AG04450 (cell line): ENCODE measurements at regions of chr17 and their contacts with region 1.

Region 1: DNA sequence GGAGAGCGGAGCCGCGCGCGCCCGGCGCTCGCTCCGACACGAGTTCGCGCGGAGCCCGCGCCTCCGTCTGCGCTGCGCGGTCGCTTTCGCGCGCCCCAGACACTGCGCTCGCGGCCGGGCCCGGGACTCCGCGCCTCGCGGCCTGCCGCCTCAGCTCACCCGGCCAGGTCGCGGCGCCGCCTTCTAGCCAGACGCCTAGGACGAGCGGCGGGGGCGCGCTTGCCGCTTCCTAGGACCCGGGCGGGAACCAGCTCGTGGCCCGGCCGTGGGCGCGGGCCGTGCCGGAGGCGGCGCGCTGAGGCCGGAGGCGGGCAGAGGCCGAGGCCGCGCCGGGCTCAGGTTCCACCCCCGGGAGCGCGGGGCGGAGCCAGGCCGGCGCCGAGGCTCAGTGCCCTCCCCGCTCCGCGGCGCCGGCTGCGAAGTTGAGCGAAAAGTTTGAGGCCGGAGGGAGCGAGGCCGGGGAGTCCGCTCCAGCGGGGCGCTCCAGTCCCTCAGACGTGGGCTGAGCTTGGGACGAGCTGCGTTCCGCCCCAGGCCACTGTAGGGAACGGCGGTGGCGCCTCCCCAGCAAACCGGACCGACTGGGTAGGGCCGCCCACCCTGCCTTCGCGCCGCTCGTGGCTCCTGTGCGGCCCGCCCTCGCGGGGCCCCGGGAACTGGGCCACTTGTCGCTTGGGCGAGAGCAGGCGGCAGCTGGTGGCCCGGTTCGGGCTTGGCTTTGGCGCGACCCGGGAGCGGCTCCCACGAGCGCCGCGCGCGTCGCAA is at the start of gene SPHK1:
- DNase-seq: no peak
- H3K4me3 ChIP-seq: peak within 1 kb of the TSS; percentile 74
- H3K27ac ChIP-seq: peak within 1 kb of the TSS; percentile 87
- H3K27me3 ChIP-seq: no peaks in the 10 kb centered on the region
- CTCF ChIP-seq: no peak
- polyA plus RNA-seq, gene SPHK1: 11.6 and 16.2 TPM in 2 replicates

Region 2: DNA sequence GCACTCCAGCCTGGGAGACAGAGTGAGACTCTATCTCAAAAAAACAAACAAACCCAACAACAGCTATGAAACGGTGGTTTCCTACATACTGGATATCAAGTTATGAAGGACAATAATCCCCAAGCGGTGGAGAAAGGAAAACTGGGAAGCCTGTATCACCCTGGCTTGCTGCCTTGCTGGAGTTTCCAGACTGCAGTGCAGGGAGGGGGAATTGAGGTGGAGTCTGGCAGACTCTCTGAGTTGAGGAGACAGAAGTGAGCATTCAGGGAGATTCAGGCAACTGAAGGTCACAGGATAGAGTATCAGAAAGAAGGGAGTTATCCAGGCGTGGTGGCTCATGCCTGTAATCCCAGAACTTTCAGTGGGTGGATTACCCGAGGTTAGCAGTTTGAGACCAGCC is 88.2 kb before region 1 on chr17:
- CTCF ChIA-PET with region 1: interaction called, 13 read pairs
- POLR2A ChIA-PET with region 1: no interaction called
- DNase-seq: no peak
- H3K4me3 ChIP-seq: no peak overlapping the region
- H3K27ac ChIP-seq: no peak overlapping the region
- H3K27me3 ChIP-seq: no peaks in the 10 kb centered on the region
- CTCF ChIP-seq: no peak

Region 3: DNA sequence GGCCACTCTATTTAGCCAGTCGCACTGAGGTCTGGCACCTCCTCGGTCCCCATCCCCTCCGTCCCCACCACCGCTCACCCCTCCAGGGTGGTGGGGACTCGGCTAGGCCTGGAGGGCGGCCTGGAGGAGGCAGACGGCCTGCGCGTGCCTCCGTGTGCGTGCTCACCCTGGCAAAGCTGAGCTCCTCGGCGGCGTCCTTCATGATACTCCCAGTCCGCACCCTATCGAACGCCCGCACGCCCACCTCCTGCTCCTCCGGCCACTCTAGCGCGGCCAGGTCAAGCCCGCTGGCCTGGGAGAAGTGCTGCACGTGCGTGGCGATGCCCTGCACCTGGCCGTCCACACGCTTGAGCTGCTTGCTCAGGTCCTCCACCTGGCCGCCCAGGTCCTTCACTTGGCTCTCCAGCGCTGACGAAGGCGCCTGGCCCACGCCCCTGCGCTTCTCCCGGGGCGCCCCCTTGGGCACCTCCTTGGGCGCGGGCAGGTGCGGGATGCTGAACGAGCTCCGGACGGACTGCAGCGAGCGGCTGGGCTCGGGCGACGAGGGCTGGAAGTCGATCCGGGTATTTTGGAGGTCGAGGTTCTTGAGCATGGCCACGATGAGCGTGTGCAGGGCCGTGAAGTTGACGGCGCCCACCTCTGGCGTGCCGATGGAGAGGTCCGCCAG is 77.0 kb before region 1 on chr17:
- CTCF ChIA-PET with region 1: interaction called, 19 read pairs
- POLR2A ChIA-PET with region 1: interaction called, 4 read pairs
- DNase-seq: no peak
- H3K4me3 ChIP-seq: no peak overlapping the region
- H3K27ac ChIP-seq: no peak overlapping the region
- H3K27me3 ChIP-seq: no peaks in the 10 kb centered on the region
- CTCF ChIP-seq: no peak

Region 4: GRCh38 chr17:76353599-76354316 is 30.6 kb before region 1 on chr17 and contains the start of gene PRPSAP1:
- CTCF ChIA-PET with region 1: interaction called, 6 read pairs
- POLR2A ChIA-PET with region 1: interaction called, 37 read pairs
- DNase-seq: peak; percentile 66
- H3K4me3 ChIP-seq: peak within 1 kb of the TSS; percentile 84
- H3K27ac ChIP-seq: peak within 1 kb of the TSS; percentile 85
- H3K27me3 ChIP-seq: no peaks in the 10 kb centered on the region
- CTCF ChIP-seq: peak; percentile 66
- polyA plus RNA-seq, gene PRPSAP1: 48.8 and 49.9 TPM in 2 replicates

Region 5: GRCh38 chr17:76365256-76365903 is 19.0 kb before region 1 on chr17:
- CTCF ChIA-PET with region 1: interaction called, 19 read pairs
- POLR2A ChIA-PET with region 1: interaction called, 25 read pairs
- DNase-seq: no peak
- H3K4me3 ChIP-seq: no peak overlapping the region
- H3K27ac ChIP-seq: no peak overlapping the region
- H3K27me3 ChIP-seq: no peaks in the 10 kb centered on the region
- CTCF ChIP-seq: no peak

Region 6: DNA sequence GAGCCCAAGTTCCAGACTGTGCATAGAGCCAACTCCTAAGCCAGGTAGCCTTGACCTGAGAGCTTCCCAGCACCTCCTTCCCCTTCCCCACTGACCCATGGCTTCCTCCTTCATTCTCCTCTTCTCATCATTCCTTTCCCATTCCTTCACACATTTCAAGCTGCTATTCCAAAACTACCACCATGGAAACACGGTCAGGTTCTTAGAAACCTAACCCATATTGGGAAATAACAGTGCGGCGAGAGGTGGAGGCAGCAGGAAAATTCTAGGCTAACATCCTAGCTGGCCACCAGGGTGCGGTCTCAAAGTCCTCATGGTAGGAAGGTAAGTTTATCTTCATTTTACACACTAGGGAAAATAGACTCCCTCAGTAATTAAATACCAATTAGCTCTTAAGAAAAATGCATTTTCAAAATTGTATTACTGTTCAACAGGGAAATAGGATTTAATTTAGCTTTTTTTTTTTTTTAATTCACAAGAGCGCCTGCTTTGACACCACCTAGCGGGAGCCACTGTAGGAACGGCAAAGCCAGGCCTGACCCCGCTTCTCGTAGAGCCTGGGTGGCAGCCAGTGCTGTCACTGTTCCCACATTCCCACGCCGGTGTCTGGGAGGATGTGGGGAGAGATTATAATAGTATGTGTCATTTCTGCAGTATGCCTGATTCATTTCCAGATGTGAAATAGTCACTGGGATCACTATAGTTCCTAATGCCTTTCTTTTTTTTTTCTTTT is 14.0 kb before region 1 on chr17:
- CTCF ChIA-PET with region 1: interaction called, 19 read pairs
- POLR2A ChIA-PET with region 1: interaction called, 25 read pairs
- DNase-seq: peak; percentile 80
- H3K4me3 ChIP-seq: no peak overlapping the region
- H3K27ac ChIP-seq: peak overlapping the region; percentile 96
- H3K27me3 ChIP-seq: no peaks in the 10 kb centered on the region
- CTCF ChIP-seq: peak; percentile 72

Region 7: GRCh38 chr17:76585091-76585817 is 200.8 kb after region 1 on chr17:
- CTCF ChIA-PET with region 1: no interaction called
- POLR2A ChIA-PET with region 1: no interaction called
- DNase-seq: no peak
- H3K4me3 ChIP-seq: peak overlapping the region; percentile 55
- H3K27ac ChIP-seq: no peak overlapping the region
- H3K27me3 ChIP-seq: peaks cover 34% of the 10 kb centered on the region
- CTCF ChIP-seq: no peak